Ovary (tissue), 10 donors: ENCODE measurements at regions of chr9 and their contacts with region 1.

Region 1: GRCh38 chr9:128288273-128289004 is 12.4 kb downstream of the SWI5 start:
- DNase-seq: no peak
- H3K4me3 ChIP-seq: no peak overlapping the region
- H3K27ac ChIP-seq: no peak overlapping the region
- H3K4me1 ChIP-seq: no peaks in the 10 kb centered on the region
- H3K27me3 ChIP-seq: no peaks in the 10 kb centered on the region
- CTCF ChIP-seq: no peak
- EP300 ChIP-seq: no peak
- POLR2A ChIP-seq: no peak

Region 2: GRCh38 chr9:128339771-128340690 is 51.6 kb after region 1 on chr9 and contains the start of gene SLC27A4:
- intact Hi-C with region 1: loop called in 1 of 4 experiments (anchors 2 kb)
- DNase-seq: peak; percentile 53 to 78 (median 67)
- H3K4me3 ChIP-seq: peak within 1 kb of the TSS; percentile 60
- H3K27ac ChIP-seq: peak within 1 kb of the TSS in 1 of 2 donors; percentile 28
- H3K4me1 ChIP-seq: peaks cover 4% of the 10 kb centered on the region
- H3K27me3 ChIP-seq: no peaks in the 10 kb centered on the region
- CTCF ChIP-seq: no peak
- EP300 ChIP-seq: no peak
- POLR2A ChIP-seq: no peak
- total RNA-seq, gene SLC27A4: 8.8 to 22.4 (median 11.0) TPM